Heart right ventricle (tissue), 16 donors: ENCODE measurements at regions of chr20 and their contacts with region 1.

Region 1: GRCh38 chr20:45052698-45053429 is 48.1 kb downstream of the KCNS1 start:
- DNase-seq: no peak
- ATAC-seq: peak in 2 of 8 donors; percentile 14 to 26
- H3K4me3 ChIP-seq: no peak overlapping the region
- H3K27ac ChIP-seq: peak overlapping the region in 3 of 10 donors; percentile 23 to 39 (median 32)
- H3K4me1 ChIP-seq: peaks cover 9 to 49% (median 41%) of the 10 kb centered on the region in 9 donors
- H3K27me3 ChIP-seq: no peaks in the 10 kb centered on the region
- CTCF ChIP-seq: no peak

Region 2: DNA sequence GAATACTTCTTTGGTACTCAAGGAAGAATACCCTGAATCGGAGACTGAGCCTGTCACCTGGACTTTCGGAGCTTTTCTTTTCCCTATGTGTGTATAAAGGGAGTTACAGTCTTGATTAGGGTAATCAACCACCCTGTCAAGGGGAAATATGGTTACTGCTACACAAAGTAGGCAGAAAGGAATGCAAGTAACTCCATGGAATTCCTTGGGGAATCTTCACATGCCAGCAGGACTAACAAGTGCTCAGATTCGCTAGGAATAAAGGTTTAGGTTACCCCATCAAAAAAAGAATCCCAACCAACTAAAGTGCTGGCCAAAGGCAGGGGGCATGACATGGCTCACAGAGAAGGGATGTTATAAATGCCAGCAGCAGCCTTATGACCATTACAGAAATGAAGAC is 37.6 kb after region 1 on chr20:
- intact Hi-C with region 1: loop called in 5 of 10 experiments (anchors 5 to 10 kb)
- DNase-seq: no peak
- ATAC-seq: no peak
- H3K4me3 ChIP-seq: no peak overlapping the region
- H3K27ac ChIP-seq: no peak overlapping the region
- H3K4me1 ChIP-seq: no peaks in the 10 kb centered on the region
- H3K27me3 ChIP-seq: peaks cover 0 to 6% (median 0%) of the 10 kb centered on the region in 7 donors
- CTCF ChIP-seq: no peak

Region 3: GRCh38 chr20:45095753-45096371 is 43.0 kb after region 1 on chr20:
- intact Hi-C with region 1: loop called in 5 of 10 experiments (anchors 5 to 10 kb)
- DNase-seq: peak in 1 of 2 donors; percentile 57
- ATAC-seq: peak in 6 of 8 donors; percentile 38 to 71 (median 54)
- H3K4me3 ChIP-seq: no peak overlapping the region
- H3K27ac ChIP-seq: no peak overlapping the region
- H3K4me1 ChIP-seq: peaks cover 2 to 14% (median 7%) of the 10 kb centered on the region in 9 donors
- H3K27me3 ChIP-seq: peaks cover 0 to 54% (median 50%) of the 10 kb centered on the region in 7 donors
- CTCF ChIP-seq: peak; percentile 55 to 78 (median 72)

Region 4: GRCh38 chr20:45254869-45255266 is 202.0 kb after region 1 on chr20:
- intact Hi-C with region 1: no loop called
- DNase-seq: no peak
- ATAC-seq: peak in 2 of 8 donors; percentile 59 to 64
- H3K4me3 ChIP-seq: no peak overlapping the region
- H3K27ac ChIP-seq: peak overlapping the region in 1 of 10 donors; percentile 47
- H3K4me1 ChIP-seq: peaks cover 0 to 19% (median 0%) of the 10 kb centered on the region in 9 donors
- H3K27me3 ChIP-seq: peaks cover 0 to 50% (median 19%) of the 10 kb centered on the region in 7 donors
- CTCF ChIP-seq: no peak